Natural killer cell (primary cell): ENCODE measurements at regions of chr6 and their contacts with region 1.

Region 1: DNA sequence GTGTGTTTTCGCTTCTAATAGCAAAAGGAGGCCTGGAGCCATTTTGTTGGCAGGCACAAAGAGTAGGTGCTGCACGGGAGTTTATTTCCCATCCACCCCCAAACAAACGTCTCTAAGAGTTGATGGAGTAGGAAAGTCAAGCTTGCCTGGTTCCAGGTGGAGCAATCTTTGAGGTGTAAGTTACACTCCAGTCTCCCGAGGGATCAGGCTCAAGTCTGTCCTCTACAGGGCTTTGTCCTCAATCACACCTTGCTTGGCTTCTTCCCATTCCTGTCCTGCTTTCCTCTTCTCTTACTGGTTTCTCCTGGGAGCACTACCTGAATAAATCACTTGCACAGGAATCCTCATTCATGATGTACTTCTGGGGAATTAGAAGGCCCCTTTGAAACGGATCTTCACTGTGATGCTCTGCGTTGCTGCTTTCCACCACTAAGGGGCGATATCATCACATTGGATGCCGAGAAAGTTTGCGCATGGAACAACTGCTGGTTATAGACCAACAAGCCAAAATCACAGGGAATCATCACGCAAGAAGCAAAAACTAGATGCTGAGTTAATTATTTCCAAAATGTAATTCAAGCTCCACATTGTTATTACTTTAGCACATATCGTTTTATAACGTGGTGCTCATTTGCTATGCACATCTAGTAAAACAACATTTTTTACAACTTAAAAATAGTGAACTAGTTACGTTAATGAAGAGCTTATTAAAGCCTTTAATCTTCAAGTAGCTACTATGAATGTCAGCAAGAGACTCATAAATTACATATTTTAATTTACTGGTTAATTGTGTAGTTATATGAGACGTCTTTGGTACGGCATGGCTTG is 156.8 kb downstream of the DNAH8 start:
- DNase-seq: peak; percentile 63 to 79
- ATAC-seq: peak; percentile 58 to 64 (median 59)
- H3K4me3 ChIP-seq: no peak overlapping the region
- H3K4me3 Mint-ChIP-seq: no peak overlapping the region
- H3K27ac ChIP-seq: no peak overlapping the region
- H3K27ac Mint-ChIP-seq: peak overlapping the region in 1 of 2 donors; percentile 9
- H3K4me1 ChIP-seq: peaks cover 11% of the 10 kb centered on the region
- H3K4me1 Mint-ChIP-seq: peaks cover 19 to 41% of the 10 kb centered on the region in 2 donors
- H3K27me3 ChIP-seq: no peaks in the 10 kb centered on the region
- H3K27me3 Mint-ChIP-seq: peaks cover 2 to 17% of the 10 kb centered on the region in 2 donors
- CTCF ChIP-seq: peak; percentile 99

Region 2: DNA sequence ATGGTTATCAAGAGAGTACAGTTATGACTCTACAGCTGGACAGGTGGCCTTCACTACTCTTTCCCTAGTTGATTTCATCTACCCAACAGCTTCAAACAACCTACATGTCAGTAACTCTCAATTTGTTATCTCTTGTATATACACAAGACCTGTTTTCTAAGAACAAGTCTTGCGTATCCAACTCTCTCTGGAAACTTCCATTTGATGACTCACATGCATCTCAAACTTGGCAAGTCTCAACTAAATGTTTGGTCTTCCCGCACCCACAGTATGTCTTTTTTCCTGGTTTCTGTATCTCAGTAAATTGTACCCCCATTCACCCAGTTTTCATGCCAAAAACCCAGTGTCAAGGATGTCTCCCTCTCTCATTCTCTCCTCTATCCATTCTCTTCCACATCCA is 329.9 kb before region 1 on chr6:
- intact Hi-C with region 1: no loop called
- DNase-seq: no peak
- ATAC-seq: no peak
- H3K4me3 ChIP-seq: no peak overlapping the region
- H3K4me3 Mint-ChIP-seq: no peak overlapping the region
- H3K27ac ChIP-seq: no peak overlapping the region
- H3K27ac Mint-ChIP-seq: no peak overlapping the region
- H3K4me1 ChIP-seq: no peaks in the 10 kb centered on the region
- H3K4me1 Mint-ChIP-seq: peaks cover 0 to 5% of the 10 kb centered on the region in 2 donors
- H3K27me3 ChIP-seq: no peaks in the 10 kb centered on the region
- H3K27me3 Mint-ChIP-seq: no peaks in the 10 kb centered on the region
- CTCF ChIP-seq: no peak

Region 3: DNA sequence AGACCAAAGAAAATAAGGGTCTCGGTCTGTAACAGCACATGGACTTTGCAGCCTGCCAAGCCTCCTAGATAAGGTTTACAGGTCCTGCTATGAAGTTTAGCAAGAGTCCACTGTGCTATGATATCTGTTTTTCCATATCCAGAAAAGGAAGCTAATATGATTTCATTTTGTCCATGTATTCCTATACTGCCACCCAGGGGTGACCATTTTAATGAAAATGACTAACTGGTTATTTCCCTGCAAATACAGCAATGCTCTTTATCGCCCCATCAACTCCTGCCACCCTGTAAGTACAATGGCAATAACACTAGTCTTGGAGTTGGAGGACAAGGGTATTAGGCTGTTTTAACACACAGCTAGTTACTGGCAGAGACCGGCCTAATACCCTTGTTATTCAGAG is 61.5 kb after region 1 on chr6:
- intact Hi-C with region 1: loop called (anchors 1 kb)
- DNase-seq: peak in 1 of 2 donors; percentile 35
- ATAC-seq: peak; percentile 32 to 59 (median 35)
- H3K4me3 ChIP-seq: no peak overlapping the region
- H3K4me3 Mint-ChIP-seq: no peak overlapping the region
- H3K27ac ChIP-seq: no peak overlapping the region
- H3K27ac Mint-ChIP-seq: no peak overlapping the region
- H3K4me1 ChIP-seq: no peaks in the 10 kb centered on the region
- H3K4me1 Mint-ChIP-seq: no peaks in the 10 kb centered on the region
- H3K27me3 ChIP-seq: no peaks in the 10 kb centered on the region
- H3K27me3 Mint-ChIP-seq: peaks cover 3 to 21% of the 10 kb centered on the region in 2 donors
- CTCF ChIP-seq: peak; percentile 44

Region 4: DNA sequence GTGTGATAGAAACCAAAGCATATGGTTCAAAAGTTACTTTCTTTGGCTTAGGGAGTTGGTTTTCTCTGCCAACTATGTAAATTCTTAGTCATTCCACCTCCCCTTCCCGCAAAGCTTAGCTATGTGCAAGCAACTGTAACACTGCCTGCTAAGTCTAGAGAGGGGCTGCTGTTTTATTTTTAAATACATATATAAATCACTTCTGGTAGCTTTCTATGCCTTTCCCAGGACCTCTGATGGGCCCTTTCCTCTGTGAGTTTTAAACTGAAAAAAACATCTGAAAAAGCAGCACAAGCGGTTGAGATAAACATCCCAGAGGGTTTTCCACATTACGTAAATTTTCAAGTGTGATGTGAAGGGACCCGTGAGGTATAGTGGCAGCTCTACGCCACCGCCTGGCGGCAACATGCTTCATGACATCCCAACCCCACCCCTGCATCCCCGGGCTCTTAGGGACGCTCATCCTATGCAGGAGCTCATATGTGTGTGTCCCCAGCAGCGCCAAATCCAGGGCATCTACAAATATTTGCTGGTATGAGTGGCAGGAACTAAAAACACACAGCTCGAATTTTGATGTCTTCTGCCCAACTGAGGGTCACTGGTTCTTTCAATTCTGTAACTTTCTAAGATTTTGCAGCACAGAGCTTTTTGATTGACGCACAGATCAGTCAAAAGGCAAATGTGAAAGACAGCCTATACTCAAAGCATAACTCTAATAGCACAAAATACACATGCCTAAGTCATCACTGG is 230.3 kb after region 1 on chr6:
- intact Hi-C with region 1: loop called (anchors 5 kb)
- DNase-seq: peak in 1 of 2 donors; percentile 44
- ATAC-seq: peak; percentile 56 to 84 (median 82)
- H3K4me3 ChIP-seq: no peak overlapping the region
- H3K4me3 Mint-ChIP-seq: no peak overlapping the region
- H3K27ac ChIP-seq: no peak overlapping the region
- H3K27ac Mint-ChIP-seq: no peak overlapping the region
- H3K4me1 ChIP-seq: no peaks in the 10 kb centered on the region
- H3K4me1 Mint-ChIP-seq: peaks cover 19 to 43% of the 10 kb centered on the region in 2 donors
- H3K27me3 ChIP-seq: no peaks in the 10 kb centered on the region
- H3K27me3 Mint-ChIP-seq: no peaks in the 10 kb centered on the region
- CTCF ChIP-seq: peak; percentile 22

Region 5: DNA sequence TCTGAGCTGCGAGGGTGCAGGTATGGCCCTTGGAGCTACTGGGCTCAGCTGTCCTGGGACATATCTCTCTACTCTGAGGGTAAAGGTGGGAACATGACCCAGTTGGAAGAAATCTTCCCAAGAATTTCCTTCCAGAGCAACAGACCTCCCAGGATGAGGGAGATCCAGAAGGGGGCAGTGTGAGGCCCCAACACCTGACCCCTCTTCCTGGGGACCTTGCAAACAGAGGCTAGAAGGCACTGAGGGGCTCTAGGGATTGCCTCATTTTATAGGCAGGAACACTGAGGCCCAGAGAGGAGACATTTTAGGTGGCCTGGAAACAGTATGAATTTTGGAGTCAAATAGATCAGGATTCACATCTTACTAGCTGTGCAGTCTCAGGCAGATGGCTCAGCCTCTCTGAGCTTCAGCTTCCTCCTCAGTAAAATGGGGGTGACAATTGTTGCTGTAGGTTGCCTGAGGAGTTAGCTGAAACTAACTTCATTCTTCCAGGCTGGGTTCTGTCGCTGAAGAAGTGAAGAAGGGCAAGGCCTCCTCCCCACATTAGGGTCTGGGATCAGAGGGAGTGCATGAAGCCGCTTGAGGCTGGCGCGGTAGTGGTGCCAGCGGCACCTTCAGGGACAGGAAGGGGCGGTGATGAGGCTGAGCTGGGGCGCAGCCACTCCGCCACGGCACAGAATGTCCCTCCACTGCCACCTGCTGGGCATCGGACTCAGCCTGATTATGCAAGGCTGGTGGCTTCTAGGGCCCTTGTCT is 430.9 kb after region 1 on chr6:
- intact Hi-C with region 1: loop called (anchors 1 kb)
- DNase-seq: peak; percentile 82 to 91
- ATAC-seq: peak; percentile 93 to 100 (median 100)
- H3K4me3 ChIP-seq: no peak overlapping the region
- H3K4me3 Mint-ChIP-seq: peak overlapping the region; percentile 57
- H3K27ac ChIP-seq: no peak overlapping the region
- H3K27ac Mint-ChIP-seq: peak overlapping the region in 1 of 2 donors; percentile 60
- H3K4me1 ChIP-seq: peaks cover 6% of the 10 kb centered on the region
- H3K4me1 Mint-ChIP-seq: peaks cover 0 to 11% of the 10 kb centered on the region in 2 donors
- H3K27me3 ChIP-seq: no peaks in the 10 kb centered on the region
- H3K27me3 Mint-ChIP-seq: peaks cover 0 to 2% of the 10 kb centered on the region in 2 donors
- CTCF ChIP-seq: peak; percentile 89